Panc1 (cell line): ENCODE measurements at regions of chr17 and their contacts with region 1.

Region 1: GRCh38 chr17:1532836-1533602 is 16.6 kb upstream of the INPP5K start:
- DNase-seq: no peak
- ATAC-seq: peak; percentile 65; the same call in 1 of the 2 replicates
- H3K4me3 ChIP-seq: no peak overlapping the region
- H3K27ac ChIP-seq: no peak overlapping the region
- H3K4me1 ChIP-seq: no peaks in the 10 kb centered on the region
- H3K27me3 ChIP-seq: no peaks in the 10 kb centered on the region
- CTCF ChIP-seq: no peak

Region 2: DNA sequence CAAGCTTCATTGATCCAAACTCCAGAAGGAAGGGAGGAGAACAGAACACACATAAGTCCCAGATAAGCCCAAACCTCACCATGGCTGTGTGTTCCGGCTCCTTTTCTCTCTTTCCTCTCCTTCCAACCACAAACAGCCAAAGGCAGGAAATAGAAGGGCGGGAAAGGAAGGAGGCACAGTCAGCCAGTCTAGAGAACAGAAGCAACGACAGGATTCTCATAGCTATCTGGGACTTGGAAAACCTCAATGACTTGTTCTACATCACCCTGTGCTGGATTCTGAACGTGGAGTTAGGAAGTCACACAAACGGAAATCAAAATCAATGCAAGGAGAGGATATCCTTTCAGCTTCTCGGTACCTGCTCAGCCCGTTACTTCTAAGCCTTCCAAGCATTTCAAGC is 86.0 kb before region 1 on chr17:
- CTCF ChIA-PET with region 1: interaction called, 17 read pairs
- POLR2A ChIA-PET with region 1: no interaction called
- in situ Hi-C with region 1: no loop called
- intact Hi-C with region 1: no loop called
- DNase-seq: no peak
- ATAC-seq: no peak
- H3K4me3 ChIP-seq: no peak overlapping the region
- H3K27ac ChIP-seq: no peak overlapping the region
- H3K4me1 ChIP-seq: peaks cover 10% of the 10 kb centered on the region; the same call in 1 of the 2 replicates
- H3K27me3 ChIP-seq: no peaks in the 10 kb centered on the region
- CTCF ChIP-seq: no peak

Region 3: GRCh38 chr17:1577583-1578013 is 44.6 kb after region 1 on chr17:
- CTCF ChIA-PET with region 1: no interaction called
- POLR2A ChIA-PET with region 1: no interaction called
- in situ Hi-C with region 1: no loop called
- intact Hi-C with region 1: no loop called
- DNase-seq: no peak
- ATAC-seq: peak; percentile 13; the same call in 1 of the 2 replicates
- H3K4me3 ChIP-seq: no peak overlapping the region
- H3K27ac ChIP-seq: no peak overlapping the region
- H3K4me1 ChIP-seq: no peaks in the 10 kb centered on the region
- H3K27me3 ChIP-seq: no peaks in the 10 kb centered on the region
- CTCF ChIP-seq: no peak

Region 4: GRCh38 chr17:1617620-1618174 is 84.7 kb after region 1 on chr17:
- CTCF ChIA-PET with region 1: no interaction called
- POLR2A ChIA-PET with region 1: no interaction called
- in situ Hi-C with region 1: no loop called
- intact Hi-C with region 1: no loop called
- DNase-seq: no peak
- ATAC-seq: no peak
- H3K4me3 ChIP-seq: no peak overlapping the region
- H3K27ac ChIP-seq: no peak overlapping the region
- H3K4me1 ChIP-seq: no peaks in the 10 kb centered on the region
- H3K27me3 ChIP-seq: no peaks in the 10 kb centered on the region
- CTCF ChIP-seq: no peak